Activated CD4-positive, alpha-beta memory T cell treated with anti-CD3 and anti-CD28 coated beads, Interleukin-2, amount 10 ng/mL, durations not matched to agents 7 days and 5 days (primary cell): ENCODE measurements at regions of chr20 and their contacts with region 1.

Region 1: DNA sequence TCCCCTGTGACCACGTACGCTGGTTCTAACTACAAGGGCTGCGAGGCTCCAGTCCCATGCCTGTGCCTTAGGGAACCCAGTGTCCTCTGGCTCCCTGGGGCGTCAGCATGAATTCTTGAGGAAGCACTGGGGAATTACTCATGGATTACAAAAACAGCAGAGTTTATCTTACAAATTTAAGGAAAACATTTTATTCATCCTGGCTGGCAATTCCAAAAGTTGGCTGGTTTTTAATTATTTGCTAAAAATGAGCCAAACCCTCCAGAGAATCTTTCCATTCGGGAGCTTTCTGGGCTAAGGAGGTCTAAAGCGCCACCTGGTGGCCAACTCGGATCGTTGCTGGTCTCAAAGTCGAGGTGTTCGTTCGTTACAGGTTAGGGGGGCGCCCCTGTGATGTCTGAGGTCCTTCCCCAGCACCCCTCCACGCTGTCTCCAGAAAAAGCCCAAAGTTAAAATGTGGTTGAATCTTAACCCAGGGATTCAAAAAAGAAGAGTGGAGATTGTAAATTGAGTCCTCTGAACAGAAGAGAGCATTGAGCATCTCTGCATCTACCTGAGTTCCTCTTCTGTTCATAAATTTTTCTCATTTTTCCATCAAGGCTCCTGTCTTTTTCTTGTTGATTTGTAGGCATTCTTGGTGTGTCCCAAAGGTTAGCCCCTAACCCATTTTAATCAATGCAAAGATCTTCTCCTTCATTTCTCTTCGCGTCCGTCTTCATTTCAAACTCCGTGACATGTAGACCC is 99.4 kb downstream of the BFSP1 start:
- DNase-seq: peak; percentile 51
- H3K4me3 Mint-ChIP-seq: no peak overlapping the region
- H3K27ac Mint-ChIP-seq: no peak overlapping the region
- H3K4me1 Mint-ChIP-seq: no peaks in the 10 kb centered on the region
- H3K27me3 Mint-ChIP-seq: peaks cover 22% of the 10 kb centered on the region

Region 2: DNA sequence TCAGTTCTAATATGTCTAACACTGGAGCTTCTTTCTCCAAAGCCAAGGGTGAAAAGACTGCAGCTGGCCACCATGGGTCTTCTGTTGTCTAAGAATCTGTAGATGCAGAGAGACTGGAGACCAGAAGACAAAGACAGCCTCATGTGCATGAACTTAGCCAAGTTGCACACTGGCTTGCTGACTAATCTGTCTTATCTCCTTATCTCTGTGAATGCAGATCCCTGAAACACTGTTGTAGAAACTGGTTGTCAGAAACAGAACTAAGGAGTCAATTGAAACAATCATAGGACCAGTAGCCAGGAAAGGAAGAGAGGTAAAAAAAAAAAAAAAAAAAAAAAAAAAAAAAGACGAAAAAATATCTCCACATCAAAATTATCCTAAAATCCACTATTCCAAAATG is 10.3 kb before region 1 on chr20:
- CTCF ChIA-PET with region 1: interaction called, 19 read pairs
- POLR2A ChIA-PET with region 1: no interaction called
- DNase-seq: no peak
- H3K4me3 Mint-ChIP-seq: no peak overlapping the region
- H3K27ac Mint-ChIP-seq: no peak overlapping the region
- H3K4me1 Mint-ChIP-seq: no peaks in the 10 kb centered on the region
- H3K27me3 Mint-ChIP-seq: peaks cover 21% of the 10 kb centered on the region